ENCODE measurements at regions of chr13 and their contacts with region 1.

Region 1: DNA sequence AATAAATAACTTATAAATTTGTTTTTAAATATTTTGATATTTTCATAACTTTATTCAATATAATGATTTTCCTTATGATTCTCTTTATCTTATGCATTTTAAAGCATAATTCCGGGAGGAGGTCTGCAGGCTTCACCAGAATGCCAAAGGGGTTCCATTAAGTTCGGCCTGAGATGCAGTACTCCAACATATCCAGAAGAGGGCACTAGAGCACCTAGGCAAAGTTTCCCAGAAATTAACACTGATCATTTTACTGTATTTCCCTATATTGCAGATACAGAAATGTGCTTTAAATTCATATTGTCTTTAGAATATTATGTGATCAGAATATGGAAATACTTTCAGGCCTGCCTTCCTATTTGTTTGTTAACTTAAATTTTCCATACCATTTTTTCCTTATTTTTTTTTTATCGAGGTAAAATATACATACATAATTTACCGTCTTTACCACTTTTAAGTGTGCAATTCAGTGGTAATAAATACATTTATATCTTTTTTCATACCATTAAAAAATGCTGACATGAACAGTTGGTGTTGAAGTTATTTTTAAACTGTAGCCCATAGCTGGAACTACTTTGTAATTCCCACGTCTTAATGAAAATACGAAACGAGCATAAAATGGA is 58.9 kb upstream of the TM9SF2 start:
- DNase-seq: peak; percentile 70
- ATAC-seq: peak; percentile 63
- H3K4me3 Mint-ChIP-seq: no peak overlapping the region
- H3K27ac Mint-ChIP-seq: no peak overlapping the region
- H3K4me1 Mint-ChIP-seq: peaks cover 19% of the 10 kb centered on the region
- H3K27me3 Mint-ChIP-seq: peaks cover 17% of the 10 kb centered on the region

Region 2: DNA sequence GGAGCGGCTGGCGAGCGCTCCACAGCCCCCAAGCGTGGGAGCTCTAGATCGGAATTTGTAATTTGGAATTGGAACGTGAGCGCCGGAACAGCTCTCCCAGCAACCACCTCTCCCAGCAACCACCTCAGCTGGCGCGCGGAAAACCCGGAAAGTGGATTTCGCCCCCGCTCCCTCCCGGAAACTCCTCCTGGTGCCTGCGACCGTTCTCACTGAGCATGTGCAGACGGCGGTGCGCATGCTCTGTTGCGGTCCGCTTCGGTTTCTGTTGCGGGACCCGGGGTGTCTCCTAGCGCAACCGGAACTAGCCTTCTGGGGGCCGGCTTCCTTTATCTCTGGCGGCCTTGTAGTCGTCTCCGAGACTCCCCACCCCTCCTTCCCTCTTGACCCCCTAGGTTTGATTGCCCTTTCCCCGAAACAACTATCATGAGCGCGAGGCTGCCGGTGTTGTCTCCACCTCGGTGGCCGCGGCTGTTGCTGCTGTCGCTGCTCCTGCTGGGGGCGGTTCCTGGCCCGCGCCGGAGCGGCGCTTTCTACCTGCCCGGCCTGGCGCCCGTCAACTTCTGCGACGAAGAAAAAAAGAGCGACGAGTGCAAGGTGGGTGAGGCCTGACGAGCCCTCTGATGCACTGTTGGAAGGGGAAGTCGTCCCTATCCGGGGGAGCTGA is 58.9 kb after region 1 on chr13 and contains the start of gene TM9SF2:
- CTCF ChIA-PET with region 1: interaction called, 39 read pairs
- DNase-seq: peak; percentile 98
- ATAC-seq: peak; percentile 67
- H3K4me3 Mint-ChIP-seq: peak within 1 kb of the TSS; percentile 97
- H3K27ac Mint-ChIP-seq: peak within 1 kb of the TSS; percentile 96
- H3K4me1 Mint-ChIP-seq: peaks cover 70% of the 10 kb centered on the region
- H3K27me3 Mint-ChIP-seq: no peaks in the 10 kb centered on the region
- total RNA-seq, gene TM9SF2: 67.9 to 79.4 TPM

Region 3: GRCh38 chr13:99566125-99567083 is 124.0 kb after region 1 on chr13:
- CTCF ChIA-PET with region 1: no interaction called
- DNase-seq: no peak
- ATAC-seq: no peak
- H3K4me3 Mint-ChIP-seq: no peak overlapping the region
- H3K27ac Mint-ChIP-seq: no peak overlapping the region
- H3K4me1 Mint-ChIP-seq: peaks cover 4% of the 10 kb centered on the region
- H3K27me3 Mint-ChIP-seq: no peaks in the 10 kb centered on the region

Region 4: DNA sequence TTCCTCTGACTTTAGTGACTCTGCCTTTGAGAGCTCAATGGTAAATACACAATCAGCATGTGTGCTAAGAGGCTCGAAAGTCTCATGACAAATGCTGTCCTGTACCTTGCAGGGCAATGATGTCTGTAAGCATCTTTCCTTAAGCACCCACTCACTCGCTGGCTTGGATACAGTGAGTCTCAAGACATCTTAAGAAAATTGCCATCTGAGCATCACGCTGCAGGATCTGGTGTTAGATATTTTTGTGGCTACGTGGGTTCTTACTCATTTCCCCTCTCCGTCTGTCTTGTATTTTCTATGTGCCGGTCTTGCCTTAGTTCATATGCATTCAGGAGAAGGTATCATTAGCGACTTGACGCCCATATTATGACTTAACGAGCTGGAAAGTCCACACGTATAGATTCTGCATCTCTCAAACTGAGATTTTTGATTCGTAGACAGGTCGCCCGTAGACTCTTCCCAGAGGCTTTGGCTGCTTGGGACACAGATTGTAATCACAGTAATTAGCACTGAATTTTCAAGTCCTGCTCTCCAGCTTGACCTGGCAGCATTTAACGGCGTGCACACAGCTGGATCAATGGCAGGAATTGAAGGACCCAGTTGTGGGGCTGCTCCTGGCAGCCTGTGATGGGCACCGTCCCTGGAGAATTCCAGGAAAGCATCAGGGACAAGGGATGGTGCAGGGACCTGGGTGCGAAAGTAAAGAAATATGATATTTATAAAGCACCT is 298.0 kb after region 1 on chr13:
- CTCF ChIA-PET with region 1: no interaction called
- DNase-seq: no peak
- ATAC-seq: no peak
- H3K4me3 Mint-ChIP-seq: no peak overlapping the region
- H3K27ac Mint-ChIP-seq: no peak overlapping the region
- H3K4me1 Mint-ChIP-seq: peaks cover 6% of the 10 kb centered on the region
- H3K27me3 Mint-ChIP-seq: peaks cover 18% of the 10 kb centered on the region